ENCODE measurements at regions of chr4 and their contacts with region 1.

Region 1: GRCh38 chr4:71009890-71010588 is 16.6 kb downstream of the DCK start:
- DNase-seq: no peak
- ATAC-seq: no peak

Region 2: GRCh38 chr4:70651864-70652506 is 358.1 kb before region 1 on chr4:
- intact Hi-C with region 1: loop called (anchors 5 kb)
- DNase-seq: no peak
- ATAC-seq: peak; percentile 46

Region 3: GRCh38 chr4:70885174-70885573 is 124.9 kb before region 1 on chr4:
- intact Hi-C with region 1: loop called (anchors 5 kb)
- DNase-seq: no peak
- ATAC-seq: peak; percentile 64